CD8-positive, alpha-beta T cell (primary cell): ENCODE measurements at regions of chr11 and their contacts with region 1.

Region 1: GRCh38 chr11:75204685-75205563 is 35.6 kb upstream of the TPBGL start:
- DNase-seq: peak; percentile 58 to 89 (median 79)
- ATAC-seq: peak; percentile 71
- H3K4me3 ChIP-seq: no peak overlapping the region
- H3K4me3 Mint-ChIP-seq: no peak overlapping the region
- H3K27ac ChIP-seq: no peak overlapping the region
- H3K27ac Mint-ChIP-seq: no peak overlapping the region
- H3K4me1 ChIP-seq: no peaks in the 10 kb centered on the region
- H3K4me1 Mint-ChIP-seq: no peaks in the 10 kb centered on the region
- H3K27me3 ChIP-seq: no peaks in the 10 kb centered on the region
- H3K27me3 Mint-ChIP-seq: peaks cover 3% of the 10 kb centered on the region
- CTCF ChIP-seq: peak; percentile 82

Region 2: GRCh38 chr11:73950869-73951710 is 1253.8 kb before region 1 on chr11 and contains the start of gene DNAJB13:
- CTCF ChIA-PET with region 1: no interaction called
- POLR2A ChIA-PET with region 1: no interaction called
- intact Hi-C with region 1: no loop called
- DNase-seq: peak in 2 of 9 experiments; percentile 28 to 43
- ATAC-seq: peak; percentile 51
- H3K4me3 ChIP-seq: no peak within 1 kb of the TSS
- H3K4me3 Mint-ChIP-seq: no peak within 1 kb of the TSS
- H3K27ac ChIP-seq: no peak within 1 kb of the TSS
- H3K27ac Mint-ChIP-seq: no peak within 1 kb of the TSS
- H3K4me1 ChIP-seq: no peaks in the 10 kb centered on the region
- H3K4me1 Mint-ChIP-seq: no peaks in the 10 kb centered on the region
- H3K27me3 ChIP-seq: no peaks in the 10 kb centered on the region
- H3K27me3 Mint-ChIP-seq: peaks cover 4% of the 10 kb centered on the region
- CTCF ChIP-seq: no peak
- total RNA-seq, gene DNAJB13: not detected

Region 3: GRCh38 chr11:75022759-75023396 is 182.0 kb before region 1 on chr11:
- CTCF ChIA-PET with region 1: interaction called, 21 read pairs
- POLR2A ChIA-PET with region 1: no interaction called
- intact Hi-C with region 1: loop called in 1 of 2 experiments (anchors 1 kb)
- DNase-seq: peak; percentile 55 to 82 (median 71)
- ATAC-seq: peak; percentile 87
- H3K4me3 ChIP-seq: no peak overlapping the region
- H3K4me3 Mint-ChIP-seq: no peak overlapping the region
- H3K27ac ChIP-seq: no peak overlapping the region
- H3K27ac Mint-ChIP-seq: no peak overlapping the region
- H3K4me1 ChIP-seq: no peaks in the 10 kb centered on the region
- H3K4me1 Mint-ChIP-seq: no peaks in the 10 kb centered on the region
- H3K27me3 ChIP-seq: no peaks in the 10 kb centered on the region
- H3K27me3 Mint-ChIP-seq: no peaks in the 10 kb centered on the region
- CTCF ChIP-seq: peak; percentile 95

Region 4: DNA sequence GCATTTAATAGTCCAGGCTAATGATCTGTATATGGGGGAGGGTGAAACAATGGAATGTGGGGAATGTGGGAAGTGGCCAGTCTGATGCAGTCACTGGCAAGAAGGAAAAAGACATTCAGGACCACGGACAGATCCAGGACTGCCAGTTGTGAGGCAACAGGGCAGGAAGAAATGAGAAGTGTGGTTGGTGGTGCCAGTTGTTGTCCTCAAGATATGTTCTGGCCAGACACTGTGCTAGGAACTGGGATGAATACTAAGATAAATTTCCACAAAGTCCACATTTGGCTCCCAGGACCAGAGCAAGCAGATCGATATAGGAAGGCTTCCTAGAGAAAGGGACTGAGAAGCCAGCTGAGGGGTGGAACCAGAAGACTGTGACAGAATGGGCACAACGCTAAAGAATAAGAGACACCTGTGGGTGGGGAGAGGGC is 28.8 kb after region 1 on chr11:
- CTCF ChIA-PET with region 1: interaction called, 14 read pairs
- POLR2A ChIA-PET with region 1: no interaction called
- intact Hi-C with region 1: no loop called
- DNase-seq: peak in 4 of 9 experiments; percentile 20 to 42 (median 34)
- ATAC-seq: no peak
- H3K4me3 ChIP-seq: no peak overlapping the region
- H3K4me3 Mint-ChIP-seq: no peak overlapping the region
- H3K27ac ChIP-seq: no peak overlapping the region
- H3K27ac Mint-ChIP-seq: no peak overlapping the region
- H3K4me1 ChIP-seq: no peaks in the 10 kb centered on the region
- H3K4me1 Mint-ChIP-seq: no peaks in the 10 kb centered on the region
- H3K27me3 ChIP-seq: no peaks in the 10 kb centered on the region
- H3K27me3 Mint-ChIP-seq: peaks cover 40% of the 10 kb centered on the region
- CTCF ChIP-seq: no peak

Region 5: DNA sequence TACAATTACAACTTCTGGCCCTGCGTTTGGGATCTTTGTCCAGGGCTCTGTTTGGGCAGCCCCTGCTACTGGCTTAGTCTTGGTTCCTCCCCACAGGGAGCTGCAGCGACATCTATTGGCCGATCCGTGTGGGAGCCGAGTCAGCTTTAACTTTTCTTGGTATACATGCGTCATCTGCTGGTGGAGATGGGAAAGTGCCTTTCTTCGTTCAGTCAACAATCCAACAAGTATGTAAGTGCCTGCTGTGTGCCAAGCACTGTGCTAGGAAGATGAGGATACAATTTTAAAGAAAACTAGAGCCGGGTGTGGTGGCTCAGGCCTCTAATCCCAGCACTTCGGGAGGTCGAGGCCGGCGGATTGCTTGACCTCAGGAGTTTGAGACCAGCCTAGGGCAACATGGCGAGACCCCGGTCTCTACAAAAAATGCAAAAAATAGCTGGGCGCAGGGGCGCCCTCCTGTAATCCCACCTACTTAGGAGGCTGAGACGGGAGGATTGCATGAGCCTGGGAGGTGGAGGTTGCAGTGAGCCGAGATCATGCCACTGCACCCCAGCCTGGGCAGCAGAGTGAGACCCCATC is 43.9 kb after region 1 on chr11:
- CTCF ChIA-PET with region 1: interaction called, 17 read pairs
- POLR2A ChIA-PET with region 1: interaction called, 4 read pairs
- intact Hi-C with region 1: loop called in 1 of 2 experiments (anchors 2 kb)
- DNase-seq: peak; percentile 77 to 91 (median 87)
- ATAC-seq: peak; percentile 100
- H3K4me3 ChIP-seq: no peak overlapping the region
- H3K4me3 Mint-ChIP-seq: no peak overlapping the region
- H3K27ac ChIP-seq: no peak overlapping the region
- H3K27ac Mint-ChIP-seq: no peak overlapping the region
- H3K4me1 ChIP-seq: no peaks in the 10 kb centered on the region
- H3K4me1 Mint-ChIP-seq: no peaks in the 10 kb centered on the region
- H3K27me3 ChIP-seq: no peaks in the 10 kb centered on the region
- H3K27me3 Mint-ChIP-seq: peaks cover 2% of the 10 kb centered on the region
- CTCF ChIP-seq: peak; percentile 100

Region 6: GRCh38 chr11:75270896-75271418 is 66.0 kb after region 1 on chr11:
- CTCF ChIA-PET with region 1: interaction called, 8 read pairs
- POLR2A ChIA-PET with region 1: no interaction called
- intact Hi-C with region 1: loop called in 1 of 2 experiments (anchors 2 kb)
- DNase-seq: peak in 3 of 9 experiments; percentile 24 to 61 (median 44)
- ATAC-seq: no peak
- H3K4me3 ChIP-seq: no peak overlapping the region
- H3K4me3 Mint-ChIP-seq: no peak overlapping the region
- H3K27ac ChIP-seq: no peak overlapping the region
- H3K27ac Mint-ChIP-seq: peak overlapping the region; percentile 98
- H3K4me1 ChIP-seq: peaks cover 52% of the 10 kb centered on the region
- H3K4me1 Mint-ChIP-seq: peaks cover 44% of the 10 kb centered on the region
- H3K27me3 ChIP-seq: no peaks in the 10 kb centered on the region
- H3K27me3 Mint-ChIP-seq: no peaks in the 10 kb centered on the region
- CTCF ChIP-seq: peak; percentile 48